ENCODE measurements at regions of chr3 and their contacts with region 1.

Region 1: GRCh38 chr3:17841190-17841828 is 98.9 kb upstream of the TBC1D5 start:
- DNase-seq: peak; percentile 88

Region 2: GRCh38 chr3:17258823-17259436 is 582.4 kb before region 1 on chr3:
- intact Hi-C with region 1: loop called (anchors 10 kb)
- DNase-seq: no peak

Region 3: DNA sequence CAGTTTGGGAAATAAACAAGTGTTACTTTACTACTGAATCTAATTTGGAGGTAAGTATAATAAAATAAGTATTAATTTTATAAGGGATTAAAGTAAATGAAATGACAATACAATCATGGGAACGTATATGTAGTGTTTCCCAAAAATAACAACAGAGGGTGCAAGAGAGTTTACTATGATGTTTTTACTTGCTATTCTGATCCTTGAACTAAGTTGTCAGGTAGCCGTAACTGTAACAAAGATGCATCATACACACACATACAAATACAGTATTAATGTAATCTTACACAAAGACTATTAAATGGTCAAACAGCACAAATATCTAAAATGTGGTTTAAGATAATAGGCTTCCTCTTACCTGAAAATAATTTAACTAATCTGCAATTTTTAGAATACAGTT is 410.3 kb before region 1 on chr3:
- intact Hi-C with region 1: loop called (anchors 2 kb)
- DNase-seq: no peak

Region 4: GRCh38 chr3:17645072-17645698 is 196.1 kb before region 1 on chr3:
- intact Hi-C with region 1: loop called (anchors 2 kb)
- DNase-seq: no peak

Region 5: GRCh38 chr3:17905996-17906395 is 64.7 kb after region 1 on chr3:
- intact Hi-C with region 1: no loop called
- DNase-seq: no peak